B cell (primary cell): ENCODE measurements at regions of chr19 and their contacts with region 1.

Region 1: GRCh38 chr19:48321622-48322591 is 3.4 kb upstream of the EMP3 start:
- DNase-seq: peak; percentile 99
- ATAC-seq: peak; percentile 67
- H3K4me3 ChIP-seq: peak overlapping the region; percentile 67 to 96 (median 81)
- H3K4me3 Mint-ChIP-seq: peak overlapping the region; percentile 97
- H3K27ac ChIP-seq: peak overlapping the region; percentile 95 to 100
- H3K27ac Mint-ChIP-seq: peak overlapping the region; percentile 100
- H3K4me1 ChIP-seq: peaks cover 46 to 61% of the 10 kb centered on the region in 2 donors
- H3K4me1 Mint-ChIP-seq: peaks cover 51% of the 10 kb centered on the region
- H3K27me3 ChIP-seq: no peaks in the 10 kb centered on the region
- H3K27me3 Mint-ChIP-seq: no peaks in the 10 kb centered on the region
- CTCF ChIP-seq: no peak

Region 2: GRCh38 chr19:48271531-48272151 is 50.3 kb before region 1 on chr19:
- CTCF ChIA-PET with region 1: interaction called, 5 read pairs
- POLR2A ChIA-PET with region 1: interaction called, 3 read pairs
- intact Hi-C with region 1: loop called (anchors 1 kb)
- DNase-seq: peak; percentile 53
- ATAC-seq: peak; percentile 55
- H3K4me3 ChIP-seq: peak overlapping the region; percentile 55 to 82 (median 74)
- H3K4me3 Mint-ChIP-seq: peak overlapping the region; percentile 97
- H3K27ac ChIP-seq: no peak overlapping the region
- H3K27ac Mint-ChIP-seq: peak overlapping the region; percentile 87
- H3K4me1 ChIP-seq: peaks cover 3 to 15% of the 10 kb centered on the region in 2 donors
- H3K4me1 Mint-ChIP-seq: peaks cover 13% of the 10 kb centered on the region
- H3K27me3 ChIP-seq: peaks cover 0 to 2% (median 0%) of the 10 kb centered on the region in 4 experiments
- H3K27me3 Mint-ChIP-seq: peaks cover 3% of the 10 kb centered on the region
- CTCF ChIP-seq: no peak

Region 3: GRCh38 chr19:48363810-48364563 is 42.1 kb after region 1 on chr19 and contains the starts of genes SYNGR4 and TMEM143:
- CTCF ChIA-PET with region 1: interaction called, 7 read pairs
- POLR2A ChIA-PET with region 1: interaction called, 16 read pairs
- intact Hi-C with region 1: loop called (anchors 1 kb)
- DNase-seq: peak; percentile 100
- ATAC-seq: peak; percentile 89
- H3K4me3 ChIP-seq: peak within 1 kb of the TSS; percentile 76 to 91 (median 85)
- H3K4me3 Mint-ChIP-seq: peak within 1 kb of the TSS; percentile 95
- H3K27ac ChIP-seq: peak within 1 kb of the TSS; percentile 93 to 97
- H3K27ac Mint-ChIP-seq: peak within 1 kb of the TSS; percentile 97
- H3K4me1 ChIP-seq: peaks cover 5 to 20% of the 10 kb centered on the region in 2 donors
- H3K4me1 Mint-ChIP-seq: peaks cover 15% of the 10 kb centered on the region
- H3K27me3 ChIP-seq: no peaks in the 10 kb centered on the region
- H3K27me3 Mint-ChIP-seq: no peaks in the 10 kb centered on the region
- CTCF ChIP-seq: no peak
- total RNA-seq, gene SYNGR4: not detected in 2 replicates
- total RNA-seq, gene TMEM143: 30.0 and 34.5 TPM in 2 replicates

Region 4: DNA sequence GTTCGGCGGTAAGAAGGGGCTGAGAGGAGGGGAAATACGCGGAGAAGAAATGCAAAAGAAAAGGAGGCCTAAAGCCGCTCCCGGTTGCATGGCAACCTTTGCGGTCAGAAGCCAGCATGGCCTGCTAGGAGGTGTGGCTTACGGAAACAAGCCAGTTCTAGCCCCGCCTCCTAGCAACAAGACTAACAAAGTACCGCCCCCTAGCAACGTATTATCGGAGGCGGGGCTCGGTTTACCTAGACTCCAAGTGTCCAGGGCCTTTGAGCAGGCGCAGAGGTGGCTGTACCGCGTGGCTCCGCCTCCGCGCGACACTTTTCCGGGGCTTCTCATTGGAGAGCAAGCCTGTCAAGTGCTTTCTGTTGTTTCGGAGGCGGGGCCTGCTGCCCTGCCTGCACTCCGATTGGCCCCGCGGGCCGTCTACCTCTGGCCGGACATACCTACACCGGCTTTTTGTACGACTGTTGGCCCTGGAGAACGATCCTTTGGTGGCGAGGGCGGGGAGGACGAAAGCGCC is 146.9 kb after region 1 on chr19:
- CTCF ChIA-PET with region 1: no interaction called
- POLR2A ChIA-PET with region 1: no interaction called
- intact Hi-C with region 1: loop called (anchors 1 kb)
- DNase-seq: peak; percentile 100
- ATAC-seq: peak; percentile 87
- H3K4me3 ChIP-seq: peak overlapping the region; percentile 8 to 90 (median 83)
- H3K4me3 Mint-ChIP-seq: peak overlapping the region; percentile 92
- H3K27ac ChIP-seq: peak overlapping the region; percentile 52 to 84
- H3K27ac Mint-ChIP-seq: peak overlapping the region; percentile 89
- H3K4me1 ChIP-seq: peaks cover 11 to 15% of the 10 kb centered on the region in 2 donors
- H3K4me1 Mint-ChIP-seq: peaks cover 17% of the 10 kb centered on the region
- H3K27me3 ChIP-seq: peaks cover 0 to 3% (median 0%) of the 10 kb centered on the region in 4 experiments
- H3K27me3 Mint-ChIP-seq: no peaks in the 10 kb centered on the region
- CTCF ChIP-seq: no peak

Region 5: GRCh38 chr19:48608798-48609263 is 286.9 kb after region 1 on chr19:
- CTCF ChIA-PET with region 1: interaction called, 4 read pairs
- POLR2A ChIA-PET with region 1: no interaction called
- intact Hi-C with region 1: loop called (anchors 1 kb)
- DNase-seq: peak; percentile 87
- ATAC-seq: peak; percentile 97
- H3K4me3 ChIP-seq: peak overlapping the region in 1 of 5 experiments; percentile 25
- H3K4me3 Mint-ChIP-seq: peak overlapping the region; percentile 67
- H3K27ac ChIP-seq: peak overlapping the region in 1 of 2 donors; percentile 4
- H3K27ac Mint-ChIP-seq: peak overlapping the region; percentile 90
- H3K4me1 ChIP-seq: peaks cover 0 to 8% of the 10 kb centered on the region in 2 donors
- H3K4me1 Mint-ChIP-seq: peaks cover 6% of the 10 kb centered on the region
- H3K27me3 ChIP-seq: no peaks in the 10 kb centered on the region
- H3K27me3 Mint-ChIP-seq: no peaks in the 10 kb centered on the region
- CTCF ChIP-seq: peak; percentile 69